Mammary epithelial cell (primary cell): ENCODE measurements at regions of chr6 and their contacts with region 1.

Region 1: DNA sequence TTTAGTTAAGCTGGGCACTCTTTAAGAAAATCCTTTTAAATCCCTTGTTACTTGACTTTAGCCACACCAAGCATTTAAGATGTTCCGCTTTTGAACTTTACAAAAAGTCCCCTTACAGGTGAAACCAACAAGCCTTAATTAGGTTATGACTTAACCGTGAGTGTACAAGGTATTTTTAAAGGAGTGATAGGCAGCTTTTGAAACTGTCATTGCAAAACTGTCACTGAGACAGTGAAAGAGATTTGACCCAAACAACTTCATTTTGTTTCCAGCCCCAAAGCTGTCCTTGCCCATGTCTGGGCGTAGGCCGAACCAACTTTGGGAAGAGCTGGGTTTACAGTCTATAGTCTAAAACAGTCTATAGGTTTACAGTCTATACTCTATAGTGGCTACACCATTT is 305.4 kb downstream of the FARS2 start:
- DNase-seq: no peak
- H3K4me3 ChIP-seq: no peak overlapping the region
- H3K27ac ChIP-seq: no peak overlapping the region
- H3K4me1 ChIP-seq: no peaks in the 10 kb centered on the region
- H3K27me3 ChIP-seq: no peaks in the 10 kb centered on the region
- CTCF ChIP-seq: no peak

Region 2: GRCh38 chr6:5606546-5606945 is 39.8 kb after region 1 on chr6:
- CTCF ChIA-PET with region 1: no interaction called
- dilution Hi-C with region 1: loop called (anchors 5 kb)
- in situ Hi-C with region 1: no loop called
- intact Hi-C with region 1: no loop called
- DNase-seq: no peak
- H3K4me3 ChIP-seq: no peak overlapping the region
- H3K27ac ChIP-seq: no peak overlapping the region
- H3K4me1 ChIP-seq: no peaks in the 10 kb centered on the region
- H3K27me3 ChIP-seq: no peaks in the 10 kb centered on the region
- CTCF ChIP-seq: no peak